ENCODE measurements at regions of chr17 and their contacts with region 1.

Region 1: GRCh38 chr17:45834471-45835396 is 9.9 kb upstream of the SPPL2C start:
- DNase-seq: no peak
- H3K4me3 ChIP-seq: no peak overlapping the region
- H3K27ac ChIP-seq: no peak overlapping the region
- H3K4me1 ChIP-seq: no peaks in the 10 kb centered on the region
- H3K27me3 ChIP-seq: no peaks in the 10 kb centered on the region
- CTCF ChIP-seq: no peak
- POLR2A ChIP-seq: no peak

Region 2: GRCh38 chr17:45394913-45395568 is 439.7 kb before region 1 on chr17:
- CTCF ChIA-PET with region 1: interaction called, 22 read pairs
- POLR2A ChIA-PET with region 1: no interaction called
- dilution Hi-C with region 1: no loop called
- intact Hi-C with region 1: loop called (anchors 10 kb)
- DNase-seq: peak; percentile 78
- H3K4me3 ChIP-seq: no peak overlapping the region
- H3K27ac ChIP-seq: no peak overlapping the region
- H3K4me1 ChIP-seq: no peaks in the 10 kb centered on the region
- H3K27me3 ChIP-seq: no peaks in the 10 kb centered on the region
- CTCF ChIP-seq: peak; percentile 62 to 78
- POLR2A ChIP-seq: no peak

Region 3: DNA sequence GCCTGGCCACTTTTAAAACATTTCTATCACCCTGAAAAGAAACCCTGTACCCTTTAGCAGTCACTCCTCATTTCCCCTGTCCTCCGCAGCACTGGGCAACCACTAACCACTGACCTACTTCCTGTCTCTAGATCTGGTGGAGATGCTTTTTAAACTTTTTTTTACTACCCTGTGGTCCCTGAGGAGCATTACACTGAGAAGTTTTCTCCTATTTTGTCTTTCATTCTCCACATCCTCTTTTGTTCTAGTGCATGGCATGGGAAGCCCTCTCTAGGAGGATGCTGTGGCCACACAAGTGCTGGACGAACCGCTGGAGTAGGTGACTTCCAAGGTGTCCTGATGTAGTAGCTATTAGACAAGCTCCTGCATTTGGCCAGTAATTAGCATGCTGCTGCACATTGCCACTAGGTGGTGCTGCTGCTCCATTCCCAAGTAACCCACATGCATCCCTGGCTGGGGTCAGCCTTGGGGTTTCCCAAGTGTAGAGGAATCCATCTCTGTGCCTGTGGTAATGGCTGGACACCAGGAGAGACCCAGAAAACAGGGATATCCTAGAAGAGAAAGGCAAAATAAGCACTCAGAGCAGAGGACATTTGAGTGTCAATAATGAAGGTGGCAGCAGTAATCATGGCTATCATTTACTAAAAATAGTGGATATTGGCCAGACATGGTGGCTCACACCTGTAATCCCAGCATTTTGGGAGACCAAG is 194.4 kb before region 1 on chr17:
- CTCF ChIA-PET with region 1: interaction called, 208 read pairs
- POLR2A ChIA-PET with region 1: no interaction called
- dilution Hi-C with region 1: no loop called
- intact Hi-C with region 1: loop called (anchors 1 kb)
- DNase-seq: peak; percentile 75
- H3K4me3 ChIP-seq: no peak overlapping the region
- H3K27ac ChIP-seq: no peak overlapping the region
- H3K4me1 ChIP-seq: no peaks in the 10 kb centered on the region
- H3K27me3 ChIP-seq: peaks cover 0 to 1% of the 10 kb centered on the region in 2 experiments
- CTCF ChIP-seq: peak; percentile 92 to 97
- POLR2A ChIP-seq: no peak

Region 4: GRCh38 chr17:45722161-45722560 is 112.6 kb before region 1 on chr17:
- CTCF ChIA-PET with region 1: interaction called, 19 read pairs
- POLR2A ChIA-PET with region 1: no interaction called
- dilution Hi-C with region 1: no loop called
- intact Hi-C with region 1: loop called (anchors 2 kb)
- DNase-seq: no peak
- H3K4me3 ChIP-seq: no peak overlapping the region
- H3K27ac ChIP-seq: no peak overlapping the region
- H3K4me1 ChIP-seq: no peaks in the 10 kb centered on the region
- H3K27me3 ChIP-seq: peaks cover 2 to 18% of the 10 kb centered on the region in 2 experiments
- CTCF ChIP-seq: peak; percentile 8 to 28
- POLR2A ChIP-seq: no peak

Region 5: GRCh38 chr17:45782889-45783592 is 51.7 kb before region 1 on chr17:
- CTCF ChIA-PET with region 1: interaction called, 12 read pairs
- POLR2A ChIA-PET with region 1: no interaction called
- dilution Hi-C with region 1: no loop called
- intact Hi-C with region 1: loop called (anchors 5 kb)
- DNase-seq: peak; percentile 11
- H3K4me3 ChIP-seq: no peak overlapping the region
- H3K27ac ChIP-seq: no peak overlapping the region
- H3K4me1 ChIP-seq: peaks cover 8% of the 10 kb centered on the region
- H3K27me3 ChIP-seq: peaks cover 57 to 63% of the 10 kb centered on the region in 2 experiments
- CTCF ChIP-seq: peak; percentile 48 to 76
- POLR2A ChIP-seq: no peak

Region 6: DNA sequence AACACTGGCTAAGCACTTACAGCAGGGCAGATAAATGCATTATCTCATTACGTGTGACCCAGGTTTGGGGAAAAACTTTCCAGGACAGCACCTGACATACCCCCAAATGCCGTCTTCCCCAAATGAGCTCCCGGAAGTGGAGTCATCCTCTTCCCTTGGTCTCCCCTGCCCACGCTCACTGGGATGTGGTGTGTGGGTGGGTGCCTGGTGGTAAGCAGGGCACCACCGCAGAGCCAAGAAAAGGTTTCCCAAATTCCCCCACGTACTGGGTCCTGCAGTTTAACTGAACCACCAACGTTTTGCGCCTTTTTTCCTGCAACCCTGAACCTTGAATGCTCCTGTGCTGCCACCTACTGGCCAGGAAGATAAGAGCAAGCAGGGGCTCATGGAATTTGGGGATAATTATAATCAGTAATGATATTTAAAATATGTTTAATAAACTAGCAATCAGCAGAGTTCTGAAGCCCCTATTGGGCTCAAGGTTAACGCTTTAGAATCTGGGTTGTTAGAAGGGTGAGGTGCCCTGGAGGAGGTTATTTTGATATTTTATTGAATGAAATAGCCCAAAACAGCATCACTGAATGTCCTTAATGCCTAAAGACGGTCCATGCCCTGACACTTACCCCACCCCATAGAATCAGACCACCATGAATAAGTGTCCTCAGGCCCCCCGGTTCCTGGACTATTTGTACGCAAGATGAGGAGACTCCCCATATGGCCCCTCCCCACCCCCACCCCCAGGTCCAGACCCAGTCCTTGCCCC is 18.0 kb after region 1 on chr17:
- CTCF ChIA-PET with region 1: interaction called, 23 read pairs
- POLR2A ChIA-PET with region 1: no interaction called
- dilution Hi-C with region 1: no loop called
- intact Hi-C with region 1: no loop called
- DNase-seq: peak; percentile 44
- H3K4me3 ChIP-seq: no peak overlapping the region
- H3K27ac ChIP-seq: no peak overlapping the region
- H3K4me1 ChIP-seq: no peaks in the 10 kb centered on the region
- H3K27me3 ChIP-seq: peaks cover 0 to 4% of the 10 kb centered on the region in 2 experiments
- CTCF ChIP-seq: peak; percentile 76 to 91
- POLR2A ChIP-seq: no peak

Region 7: GRCh38 chr17:45883063-45883462 is 48.3 kb after region 1 on chr17:
- CTCF ChIA-PET with region 1: no interaction called
- POLR2A ChIA-PET with region 1: no interaction called
- dilution Hi-C with region 1: no loop called
- intact Hi-C with region 1: no loop called
- DNase-seq: no peak
- H3K4me3 ChIP-seq: no peak overlapping the region
- H3K27ac ChIP-seq: no peak overlapping the region
- H3K4me1 ChIP-seq: no peaks in the 10 kb centered on the region
- H3K27me3 ChIP-seq: no peaks in the 10 kb centered on the region
- CTCF ChIP-seq: no peak
- POLR2A ChIP-seq: no peak

Region 8: DNA sequence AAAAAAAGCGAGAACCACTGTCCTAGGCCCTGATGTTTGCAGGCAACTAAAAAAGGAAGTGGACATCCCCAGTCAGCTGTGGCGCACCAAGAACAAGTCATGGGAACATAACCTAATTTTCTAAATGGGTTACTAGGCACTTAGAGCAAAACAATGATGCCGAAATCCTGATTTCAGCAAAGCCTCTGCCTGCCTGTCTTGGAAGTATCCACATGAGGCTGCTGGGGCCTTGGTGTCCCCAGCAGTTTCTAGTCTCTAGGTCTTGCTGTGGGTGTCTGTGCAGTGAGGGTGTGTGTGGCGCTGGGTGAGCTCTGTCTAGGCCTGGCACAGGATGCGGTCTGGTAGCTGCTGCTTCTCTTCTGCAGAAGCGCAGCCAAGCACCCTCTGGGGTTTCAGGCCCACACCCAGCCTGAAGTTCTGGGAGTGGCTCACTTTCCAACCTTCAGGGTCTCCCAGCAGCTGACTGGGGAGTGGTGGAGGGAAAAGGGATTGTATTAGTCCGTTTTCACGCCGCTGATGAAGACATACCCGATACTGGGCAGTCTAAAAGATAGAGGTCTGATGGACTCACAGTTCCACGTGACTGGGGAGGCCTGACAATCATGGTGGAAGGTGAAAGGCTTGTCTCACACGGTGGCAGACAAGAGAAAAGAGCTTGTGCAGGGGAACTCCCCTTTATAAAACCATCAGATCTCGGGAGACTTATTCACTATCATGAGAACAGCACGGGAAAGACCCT is 185.5 kb after region 1 on chr17:
- CTCF ChIA-PET with region 1: no interaction called
- POLR2A ChIA-PET with region 1: no interaction called
- dilution Hi-C with region 1: no loop called
- intact Hi-C with region 1: no loop called
- DNase-seq: no peak
- H3K4me3 ChIP-seq: no peak overlapping the region
- H3K27ac ChIP-seq: no peak overlapping the region
- H3K4me1 ChIP-seq: no peaks in the 10 kb centered on the region
- H3K27me3 ChIP-seq: no peaks in the 10 kb centered on the region
- CTCF ChIP-seq: no peak
- POLR2A ChIP-seq: no peak